HepG2 (cell line): ENCODE measurements at regions of chr14 and their contacts with region 1.

Region 1: DNA sequence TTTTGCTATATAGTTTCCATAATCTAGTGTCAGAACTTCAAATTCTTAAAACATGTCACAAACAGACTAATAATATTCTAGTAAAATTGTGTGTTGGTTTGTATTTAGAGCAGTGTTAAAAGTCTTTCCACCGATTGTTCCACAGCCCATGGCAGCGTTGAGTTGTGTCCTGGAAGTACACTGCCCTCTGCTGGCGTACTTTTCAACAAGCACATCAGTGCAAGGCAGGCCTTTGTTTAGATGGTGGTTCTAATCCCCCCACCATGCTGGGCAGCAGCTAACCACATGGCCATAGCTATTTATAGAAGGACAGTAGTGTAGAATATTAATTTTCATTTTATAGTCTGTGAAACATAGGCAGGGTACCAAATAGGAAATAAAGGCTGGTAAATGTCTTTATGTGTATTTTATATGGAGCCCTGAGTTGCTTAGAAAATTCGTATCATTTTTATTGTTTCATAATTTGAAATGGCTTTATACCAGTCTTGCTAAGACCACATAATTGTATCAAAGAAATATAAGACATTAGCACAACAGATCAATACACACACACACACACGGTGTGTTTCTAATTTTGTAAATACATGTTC is 235.4 kb downstream of the SEC23A start:
- DNase-seq: peak; percentile 91
- ATAC-seq: peak; percentile 92
- H3K4me3 ChIP-seq: no peak overlapping the region
- H3K27ac ChIP-seq: no peak overlapping the region
- H3K4me1 ChIP-seq: peaks cover 19% of the 10 kb centered on the region
- H3K27me3 ChIP-seq: peaks cover 0 to 9% of the 10 kb centered on the region in 2 experiments; a peak in 2 of 5 replicates
- CTCF ChIP-seq: peak; percentile 98
- EP300 ChIP-seq: no peak
- POLR2A ChIP-seq: no peak
- RAD21 ChIP-seq: peak; percentile 84

Region 2: GRCh38 chr14:37709419-37710195 is 1158.0 kb before region 1 on chr14:
- CTCF ChIA-PET with region 1: no interaction called
- POLR2A ChIA-PET with region 1: no interaction called
- in situ Hi-C with region 1: no loop called
- intact Hi-C with region 1: loop called (anchors 5 kb)
- DNase-seq: peak; percentile 70
- ATAC-seq: no peak
- H3K4me3 ChIP-seq: no peak overlapping the region
- H3K27ac ChIP-seq: no peak overlapping the region
- H3K4me1 ChIP-seq: peaks cover 39% of the 10 kb centered on the region
- H3K27me3 ChIP-seq: no peaks in the 10 kb centered on the region
- CTCF ChIP-seq: peak; percentile 75
- EP300 ChIP-seq: no peak
- POLR2A ChIP-seq: no peak
- RAD21 ChIP-seq: peak; percentile 80

Region 3: GRCh38 chr14:37985826-37986470 is 881.7 kb before region 1 on chr14:
- CTCF ChIA-PET with region 1: interaction called, 6 read pairs
- POLR2A ChIA-PET with region 1: no interaction called
- in situ Hi-C with region 1: no loop called
- intact Hi-C with region 1: loop called (anchors 1 kb)
- DNase-seq: peak; percentile 77
- ATAC-seq: peak; percentile 93
- H3K4me3 ChIP-seq: no peak overlapping the region
- H3K27ac ChIP-seq: no peak overlapping the region
- H3K4me1 ChIP-seq: no peaks in the 10 kb centered on the region
- H3K27me3 ChIP-seq: no peaks in the 10 kb centered on the region; a peak in 1 of 5 replicates
- CTCF ChIP-seq: peak; percentile 89
- EP300 ChIP-seq: no peak
- POLR2A ChIP-seq: no peak
- RAD21 ChIP-seq: no peak

Region 4: DNA sequence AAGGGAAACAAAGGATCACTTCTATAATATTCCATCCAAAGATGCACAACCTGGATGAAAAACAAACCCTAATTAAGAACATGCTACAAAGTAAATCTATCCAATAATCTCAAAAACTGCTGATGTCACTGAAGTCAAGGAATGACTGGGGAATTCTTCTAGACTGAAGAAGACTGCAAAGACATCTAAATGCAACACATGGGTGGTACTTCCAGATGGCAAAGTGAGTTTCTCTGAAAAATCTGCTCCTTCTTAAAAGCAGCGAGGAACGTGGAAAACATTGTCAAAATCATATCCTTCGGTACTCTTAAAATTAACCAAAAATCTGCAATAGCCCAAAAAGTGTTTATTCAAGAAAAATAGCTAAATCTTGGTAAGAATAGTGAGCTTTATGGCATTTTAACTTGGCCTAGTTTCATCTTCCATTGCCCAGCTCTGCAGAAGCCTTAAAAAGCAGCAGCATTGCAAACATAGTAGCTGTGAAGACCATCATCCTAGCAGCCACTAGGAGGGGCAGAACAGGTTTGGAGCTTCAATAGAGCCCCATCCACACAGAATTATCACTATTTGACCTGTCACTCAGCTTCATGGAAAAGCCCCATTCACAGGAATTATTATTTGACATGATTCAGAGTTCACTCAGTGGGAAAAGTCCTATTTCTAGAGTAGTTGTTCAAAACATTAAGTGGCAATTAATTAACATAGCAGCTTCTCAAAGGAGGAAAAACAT is 619.2 kb before region 1 on chr14:
- CTCF ChIA-PET with region 1: no interaction called
- POLR2A ChIA-PET with region 1: no interaction called
- in situ Hi-C with region 1: no loop called
- intact Hi-C with region 1: loop called (anchors 5 kb)
- DNase-seq: peak; percentile 28
- ATAC-seq: peak; percentile 98
- H3K4me3 ChIP-seq: no peak overlapping the region
- H3K27ac ChIP-seq: no peak overlapping the region
- H3K4me1 ChIP-seq: no peaks in the 10 kb centered on the region
- H3K27me3 ChIP-seq: no peaks in the 10 kb centered on the region
- CTCF ChIP-seq: peak; percentile 51
- EP300 ChIP-seq: no peak
- POLR2A ChIP-seq: no peak
- RAD21 ChIP-seq: no peak

Region 5: GRCh38 chr14:38721822-38722431 is 145.7 kb before region 1 on chr14:
- CTCF ChIA-PET with region 1: interaction called, 36 read pairs
- POLR2A ChIA-PET with region 1: no interaction called
- in situ Hi-C with region 1: loop called (anchors 5 kb)
- intact Hi-C with region 1: loop called (anchors 1 kb)
- DNase-seq: peak; percentile 77
- ATAC-seq: peak; percentile 98
- H3K4me3 ChIP-seq: no peak overlapping the region
- H3K27ac ChIP-seq: no peak overlapping the region
- H3K4me1 ChIP-seq: no peaks in the 10 kb centered on the region
- H3K27me3 ChIP-seq: no peaks in the 10 kb centered on the region
- CTCF ChIP-seq: peak; percentile 94
- EP300 ChIP-seq: no peak; a peak in 1 of 4 replicates
- POLR2A ChIP-seq: no peak
- RAD21 ChIP-seq: peak; percentile 79

Region 6: GRCh38 chr14:38799671-38800070 is 68.0 kb before region 1 on chr14:
- CTCF ChIA-PET with region 1: no interaction called
- POLR2A ChIA-PET with region 1: no interaction called
- in situ Hi-C with region 1: no loop called
- intact Hi-C with region 1: no loop called
- DNase-seq: no peak
- ATAC-seq: no peak
- H3K4me3 ChIP-seq: no peak overlapping the region
- H3K27ac ChIP-seq: no peak overlapping the region
- H3K4me1 ChIP-seq: no peaks in the 10 kb centered on the region
- H3K27me3 ChIP-seq: no peaks in the 10 kb centered on the region
- CTCF ChIP-seq: no peak
- EP300 ChIP-seq: no peak
- POLR2A ChIP-seq: no peak
- RAD21 ChIP-seq: no peak

Region 7: DNA sequence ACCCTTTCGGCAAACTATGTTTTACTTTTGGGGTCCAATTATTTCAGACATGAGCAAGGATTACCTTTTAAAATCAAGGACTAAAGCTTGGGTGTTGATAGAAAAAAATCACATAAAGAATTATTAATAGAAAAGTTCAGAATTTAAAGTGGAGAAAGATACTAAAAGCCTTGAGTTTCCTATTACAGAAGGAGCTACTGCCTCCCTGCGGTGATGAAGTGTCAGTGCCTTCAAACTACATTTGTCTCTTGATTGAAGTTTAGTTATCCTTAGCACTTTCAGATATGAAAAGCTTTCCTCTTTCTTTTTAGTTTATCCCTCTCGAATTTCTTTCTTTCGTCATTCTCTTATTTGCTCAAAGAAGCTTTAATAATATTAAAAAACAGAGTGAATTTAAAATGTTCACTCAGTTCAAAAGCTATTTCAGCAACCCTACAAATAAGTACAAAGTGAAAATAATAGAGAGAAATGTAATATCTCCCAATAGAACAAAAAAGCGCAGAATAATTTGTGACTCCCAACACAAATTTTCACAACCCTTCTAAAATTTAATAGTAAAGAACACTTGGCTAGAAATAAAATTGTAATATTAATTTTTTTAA is 147.8 kb after region 1 on chr14:
- CTCF ChIA-PET with region 1: interaction called, 19 read pairs
- POLR2A ChIA-PET with region 1: no interaction called
- in situ Hi-C with region 1: loop called (anchors 5 kb)
- intact Hi-C with region 1: loop called (anchors 1 kb)
- DNase-seq: peak; percentile 84
- ATAC-seq: peak; percentile 41; the same call in 2 of the 3 replicates
- H3K4me3 ChIP-seq: no peak overlapping the region
- H3K27ac ChIP-seq: no peak overlapping the region
- H3K4me1 ChIP-seq: peaks cover 34% of the 10 kb centered on the region
- H3K27me3 ChIP-seq: no peaks in the 10 kb centered on the region
- CTCF ChIP-seq: peak; percentile 88
- EP300 ChIP-seq: no peak
- POLR2A ChIP-seq: no peak
- RAD21 ChIP-seq: peak; percentile 81